ENCODE measurements at regions of chr15 and their contacts with region 1.

Region 1: GRCh38 chr15:63539521-63539920 is 35.1 kb downstream of the USP3 start:
- DNase-seq: peak in 4 of 5 donors; percentile 37 to 49 (median 42)
- ATAC-seq: peak in 1 of 4 donors; percentile 55
- H3K4me3 ChIP-seq: no peak overlapping the region
- H3K27ac ChIP-seq: no peak overlapping the region
- H3K4me1 ChIP-seq: peaks cover 0 to 45% (median 0%) of the 10 kb centered on the region in 12 donors
- H3K27me3 ChIP-seq: no peaks in the 10 kb centered on the region
- CTCF ChIP-seq: no peak
- POLR2A ChIP-seq: no peak

Region 2: GRCh38 chr15:63436872-63437375 is 102.6 kb before region 1 on chr15:
- intact Hi-C with region 1: no loop called
- DNase-seq: peak; percentile 84 to 91 (median 86)
- ATAC-seq: peak; percentile 46 to 84 (median 81)
- H3K4me3 ChIP-seq: no peak overlapping the region
- H3K27ac ChIP-seq: peak overlapping the region in 11 of 12 donors; percentile 3 to 66 (median 47)
- H3K4me1 ChIP-seq: peaks cover 0 to 22% (median 9%) of the 10 kb centered on the region in 12 donors
- H3K27me3 ChIP-seq: no peaks in the 10 kb centered on the region
- CTCF ChIP-seq: peak in 1 of 12 donors; percentile 29
- POLR2A ChIP-seq: no peak

Region 3: DNA sequence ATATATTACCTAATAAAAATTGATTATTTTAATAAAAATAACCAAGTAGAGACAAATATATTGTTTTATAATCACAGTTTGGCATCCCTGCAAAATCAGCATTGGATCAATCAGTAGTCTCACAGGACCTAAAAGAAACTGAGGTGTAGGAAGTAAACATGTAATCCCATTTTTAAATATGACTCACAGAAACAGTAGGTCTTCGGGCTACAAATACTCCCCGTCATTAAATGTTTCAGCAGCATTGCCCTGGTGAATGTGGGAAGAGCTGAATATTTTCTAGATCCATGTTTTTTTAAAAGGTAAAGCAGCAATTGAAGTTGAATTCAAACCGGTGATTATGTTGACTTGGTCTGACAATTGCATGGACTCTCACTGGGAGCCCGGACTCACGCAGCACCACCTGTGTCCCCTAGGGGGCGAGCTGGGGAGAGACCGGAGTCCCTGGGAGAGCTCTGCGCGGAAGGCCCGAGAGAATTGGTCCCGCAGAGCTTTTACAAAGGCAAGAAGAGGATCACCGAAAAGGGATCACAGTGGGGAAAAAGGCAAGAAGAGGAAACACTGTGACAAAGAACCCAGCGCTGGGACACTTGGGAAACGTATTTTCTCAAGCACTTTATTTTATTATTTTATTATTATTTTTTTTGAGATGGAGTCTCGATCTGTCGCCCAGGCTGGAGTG is 52.3 kb before region 1 on chr15:
- intact Hi-C with region 1: loop called in 1 of 10 experiments (anchors 5 kb)
- DNase-seq: peak; percentile 86 to 95 (median 88)
- ATAC-seq: peak; percentile 88 to 95 (median 92)
- H3K4me3 ChIP-seq: peak overlapping the region in 2 of 12 donors; percentile 5 to 19
- H3K27ac ChIP-seq: peak overlapping the region in 1 of 12 donors; percentile 66
- H3K4me1 ChIP-seq: peaks cover 0 to 66% (median 0%) of the 10 kb centered on the region in 12 donors
- H3K27me3 ChIP-seq: no peaks in the 10 kb centered on the region
- CTCF ChIP-seq: peak; percentile 88 to 97 (median 95)
- POLR2A ChIP-seq: no peak

Region 4: DNA sequence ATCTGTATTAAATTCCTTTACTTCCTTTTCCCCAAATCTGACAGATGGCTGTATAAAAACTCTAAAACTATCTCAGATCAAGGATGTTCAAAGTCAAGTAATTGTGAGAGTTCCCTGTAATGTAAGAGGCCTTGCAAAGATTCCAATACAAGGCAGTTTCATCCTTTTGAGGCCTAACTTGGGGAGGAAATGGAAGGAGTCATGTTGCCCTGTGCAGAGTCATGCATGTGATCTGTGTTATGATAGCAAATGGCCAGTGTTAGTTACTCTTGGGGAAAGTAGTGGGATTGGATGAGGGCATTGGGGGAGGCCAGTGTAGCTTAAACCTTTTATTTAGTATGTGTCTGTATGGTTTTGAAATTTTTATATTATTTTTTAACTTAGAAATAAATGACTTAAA is 34.0 kb after region 1 on chr15:
- intact Hi-C with region 1: loop called in 1 of 10 experiments (anchors 5 kb)
- DNase-seq: no peak
- ATAC-seq: no peak
- H3K4me3 ChIP-seq: no peak overlapping the region
- H3K27ac ChIP-seq: no peak overlapping the region
- H3K4me1 ChIP-seq: peaks cover 0 to 8% (median 0%) of the 10 kb centered on the region in 12 donors
- H3K27me3 ChIP-seq: no peaks in the 10 kb centered on the region
- CTCF ChIP-seq: no peak
- POLR2A ChIP-seq: no peak

Region 5: GRCh38 chr15:63729115-63729884 is 189.8 kb after region 1 on chr15:
- intact Hi-C with region 1: no loop called
- DNase-seq: no peak
- ATAC-seq: no peak
- H3K4me3 ChIP-seq: no peak overlapping the region
- H3K27ac ChIP-seq: no peak overlapping the region
- H3K4me1 ChIP-seq: peaks cover 0 to 9% (median 0%) of the 10 kb centered on the region in 12 donors
- H3K27me3 ChIP-seq: no peaks in the 10 kb centered on the region
- CTCF ChIP-seq: no peak
- POLR2A ChIP-seq: no peak